ENCODE measurements at regions of chr22 and their contacts with region 1.

Region 1: GRCh38 chr22:39080052-39080762 is 3.1 kb downstream of the APOBEC3G start:
- DNase-seq: no peak
- ATAC-seq: no peak
- H3K4me3 Mint-ChIP-seq: peak overlapping the region; percentile 37
- H3K27ac Mint-ChIP-seq: peak overlapping the region; percentile 47
- H3K4me1 Mint-ChIP-seq: peaks cover 58% of the 10 kb centered on the region
- H3K27me3 Mint-ChIP-seq: no peaks in the 10 kb centered on the region
- CTCF ChIP-seq: no peak

Region 2: GRCh38 chr22:39090426-39091064 is 10.3 kb after region 1 on chr22:
- CTCF ChIA-PET with region 1: no interaction called
- POLR2A ChIA-PET with region 1: interaction called, 14 read pairs
- intact Hi-C with region 1: no loop called
- DNase-seq: peak; percentile 95
- ATAC-seq: peak; percentile 83
- H3K4me3 Mint-ChIP-seq: peak overlapping the region; percentile 58
- H3K27ac Mint-ChIP-seq: peak overlapping the region; percentile 98
- H3K4me1 Mint-ChIP-seq: peaks cover 83% of the 10 kb centered on the region
- H3K27me3 Mint-ChIP-seq: no peaks in the 10 kb centered on the region
- CTCF ChIP-seq: no peak

Region 3: DNA sequence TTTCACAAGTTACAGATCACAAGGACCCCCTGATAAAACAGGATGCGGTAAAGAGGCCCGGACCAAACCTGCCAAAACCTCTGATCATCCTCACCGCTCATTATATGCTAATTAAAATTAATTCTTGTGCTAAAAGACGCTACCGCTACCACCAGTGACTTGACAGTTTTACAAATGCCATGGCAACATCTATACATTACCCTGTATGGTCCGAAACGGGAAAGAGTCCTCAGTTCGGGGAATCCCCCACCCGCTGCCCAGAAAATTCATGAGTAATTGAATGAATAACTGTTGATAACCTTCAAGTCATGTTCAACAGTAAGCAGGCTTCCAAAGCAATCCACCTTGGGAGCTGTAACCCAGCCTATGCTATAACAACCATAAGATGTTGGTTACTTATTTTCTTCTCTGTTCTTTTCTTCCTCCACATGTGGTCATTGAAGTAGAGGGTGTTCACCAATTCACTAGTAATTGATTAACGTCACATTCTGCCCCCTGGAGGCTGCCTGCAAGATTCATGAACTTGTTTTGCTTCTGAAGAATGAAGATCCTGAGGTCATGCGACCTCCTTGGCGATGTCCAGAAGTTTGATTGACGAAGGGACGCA is 37.5 kb after region 1 on chr22:
- CTCF ChIA-PET with region 1: interaction called, 7 read pairs
- POLR2A ChIA-PET with region 1: interaction called, 4 read pairs
- intact Hi-C with region 1: loop called (anchors 5 kb)
- DNase-seq: peak; percentile 91
- ATAC-seq: peak; percentile 70
- H3K4me3 Mint-ChIP-seq: peak overlapping the region; percentile 48
- H3K27ac Mint-ChIP-seq: peak overlapping the region; percentile 93
- H3K4me1 Mint-ChIP-seq: peaks cover 59% of the 10 kb centered on the region
- H3K27me3 Mint-ChIP-seq: no peaks in the 10 kb centered on the region
- CTCF ChIP-seq: peak; percentile 66

Measured in activated CD8-positive, alpha-beta T cell treated with anti-CD3 and anti-CD28 coated beads for 36 hours (primary cell).